ENCODE measurements at regions of chr2 and their contacts with region 1.

Region 1: GRCh38 chr2:208392300-208393080 is 14.1 kb upstream of the PTH2R start:
- DNase-seq: peak; percentile 34
- H3K4me3 ChIP-seq: no peak overlapping the region
- H3K27ac ChIP-seq: no peak overlapping the region
- H3K4me1 ChIP-seq: no peaks in the 10 kb centered on the region
- H3K27me3 ChIP-seq: peaks cover 4% of the 10 kb centered on the region

Region 2: GRCh38 chr2:209277444-209277843 is 885.0 kb after region 1 on chr2:
- in situ Hi-C with region 1: no loop called
- DNase-seq: no peak
- H3K4me3 ChIP-seq: no peak overlapping the region
- H3K27ac ChIP-seq: no peak overlapping the region
- H3K4me1 ChIP-seq: no peaks in the 10 kb centered on the region
- H3K27me3 ChIP-seq: no peaks in the 10 kb centered on the region

Region 3: GRCh38 chr2:209556354-209556961 is 1164.0 kb after region 1 on chr2:
- in situ Hi-C with region 1: loop called (anchors 10 kb)
- DNase-seq: peak; percentile 64
- H3K4me3 ChIP-seq: no peak overlapping the region
- H3K27ac ChIP-seq: no peak overlapping the region
- H3K4me1 ChIP-seq: no peaks in the 10 kb centered on the region
- H3K27me3 ChIP-seq: no peaks in the 10 kb centered on the region

Measured in GM23248 (cell line).